ENCODE measurements at regions of chr1 and their contacts with region 1.

Region 1: DNA sequence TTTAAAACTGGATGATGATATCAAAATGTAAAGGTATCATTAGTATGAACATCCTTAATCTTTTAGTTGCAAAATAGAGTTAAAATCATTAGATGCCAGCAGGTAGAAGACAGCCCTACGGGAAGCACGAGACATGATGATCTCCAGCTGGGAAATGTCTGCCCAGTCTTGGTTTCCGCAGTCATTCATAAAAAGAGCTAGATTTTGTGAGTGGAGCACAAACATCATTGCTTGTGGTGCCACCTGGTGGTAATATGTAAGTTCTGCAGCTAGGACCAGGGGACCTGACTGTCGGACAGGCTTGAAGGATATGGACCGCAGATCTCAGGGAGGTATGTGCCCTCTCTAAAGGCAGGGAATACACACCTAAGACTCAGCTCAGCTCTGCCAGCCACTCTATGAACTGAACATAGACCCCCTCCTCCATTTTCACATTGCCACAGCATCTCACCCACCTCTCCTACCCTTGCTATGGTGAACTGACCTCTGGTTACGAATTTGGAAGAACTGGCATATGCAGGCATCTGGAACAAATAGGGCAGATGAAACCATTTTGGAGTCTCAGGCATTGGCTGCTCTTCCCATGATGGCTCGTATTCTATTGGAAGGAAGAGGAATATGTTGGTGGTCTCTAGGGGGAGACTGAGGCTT is 9.2 kb downstream of the FCMR start:
- DNase-seq: peak; percentile 57
- ATAC-seq: peak; percentile 77
- H3K4me3 ChIP-seq: no peak overlapping the region
- H3K27ac ChIP-seq: no peak overlapping the region
- H3K4me1 ChIP-seq: no peaks in the 10 kb centered on the region
- H3K27me3 ChIP-seq: peaks cover 23% of the 10 kb centered on the region
- CTCF ChIP-seq: peak; percentile 83

Region 2: GRCh38 chr1:206445116-206445515 is 467.5 kb before region 1 on chr1:
- CTCF ChIA-PET with region 1: no interaction called
- POLR2A ChIA-PET with region 1: no interaction called
- in situ Hi-C with region 1: no loop called
- intact Hi-C with region 1: no loop called
- DNase-seq: no peak
- ATAC-seq: no peak
- H3K4me3 ChIP-seq: no peak overlapping the region
- H3K27ac ChIP-seq: no peak overlapping the region
- H3K4me1 ChIP-seq: no peaks in the 10 kb centered on the region
- H3K27me3 ChIP-seq: no peaks in the 10 kb centered on the region
- CTCF ChIP-seq: no peak

Region 3: GRCh38 chr1:206479183-206480125 is 433.1 kb before region 1 on chr1:
- CTCF ChIA-PET with region 1: no interaction called
- POLR2A ChIA-PET with region 1: no interaction called
- in situ Hi-C with region 1: no loop called
- intact Hi-C with region 1: loop called (anchors 5 kb)
- DNase-seq: peak; percentile 54
- ATAC-seq: peak; percentile 79
- H3K4me3 ChIP-seq: no peak overlapping the region
- H3K27ac ChIP-seq: no peak overlapping the region
- H3K4me1 ChIP-seq: no peaks in the 10 kb centered on the region
- H3K27me3 ChIP-seq: no peaks in the 10 kb centered on the region
- CTCF ChIP-seq: peak; percentile 90

Region 4: GRCh38 chr1:206612129-206612876 is 300.3 kb before region 1 on chr1 and contains the start of gene EIF2D:
- CTCF ChIA-PET with region 1: no interaction called
- POLR2A ChIA-PET with region 1: no interaction called
- in situ Hi-C with region 1: no loop called
- intact Hi-C with region 1: loop called (anchors 5 kb)
- DNase-seq: peak; percentile 66
- ATAC-seq: peak; percentile 98
- H3K4me3 ChIP-seq: peak within 1 kb of the TSS; percentile 89
- H3K27ac ChIP-seq: peak within 1 kb of the TSS; percentile 95
- H3K4me1 ChIP-seq: 0 out of 2 replicates have a peak, but pooled peaks cover 5% of the 10 kb centered on the region
- H3K27me3 ChIP-seq: no peaks in the 10 kb centered on the region; the same call in 1 of the 2 replicates
- CTCF ChIP-seq: peak; percentile 99
- total RNA-seq, gene EIF2D: 28.7 TPM

Region 5: GRCh38 chr1:206635080-206635977 is 277.2 kb before region 1 on chr1 and contains the start of gene DYRK3:
- CTCF ChIA-PET with region 1: interaction called, 3 read pairs
- POLR2A ChIA-PET with region 1: interaction called, 6 read pairs
- in situ Hi-C with region 1: no loop called
- intact Hi-C with region 1: loop called (anchors 10 kb)
- DNase-seq: peak; percentile 50
- ATAC-seq: peak; percentile 97
- H3K4me3 ChIP-seq: peak within 1 kb of the TSS; percentile 91 to 93
- H3K27ac ChIP-seq: peak within 1 kb of the TSS; percentile 88
- H3K4me1 ChIP-seq: peaks cover 15% of the 10 kb centered on the region
- H3K27me3 ChIP-seq: no peaks in the 10 kb centered on the region
- CTCF ChIP-seq: no peak
- total RNA-seq, gene DYRK3: 12.0 TPM

Region 6: GRCh38 chr1:206727981-206728696 is 184.4 kb before region 1 on chr1:
- CTCF ChIA-PET with region 1: interaction called, 8 read pairs
- POLR2A ChIA-PET with region 1: no interaction called
- in situ Hi-C with region 1: no loop called
- intact Hi-C with region 1: loop called (anchors 2 kb)
- DNase-seq: no peak
- ATAC-seq: no peak
- H3K4me3 ChIP-seq: no peak overlapping the region
- H3K27ac ChIP-seq: no peak overlapping the region
- H3K4me1 ChIP-seq: no peaks in the 10 kb centered on the region
- H3K27me3 ChIP-seq: no peaks in the 10 kb centered on the region
- CTCF ChIP-seq: no peak

Region 7: GRCh38 chr1:206982216-206982615 is 69.6 kb after region 1 on chr1:
- CTCF ChIA-PET with region 1: interaction called, 19 read pairs
- POLR2A ChIA-PET with region 1: no interaction called
- in situ Hi-C with region 1: no loop called
- intact Hi-C with region 1: no loop called
- DNase-seq: peak; percentile 22
- ATAC-seq: peak; percentile 94
- H3K4me3 ChIP-seq: no peak overlapping the region
- H3K27ac ChIP-seq: no peak overlapping the region
- H3K4me1 ChIP-seq: no peaks in the 10 kb centered on the region
- H3K27me3 ChIP-seq: peaks cover 7% of the 10 kb centered on the region
- CTCF ChIP-seq: peak; percentile 84